Naive thymus-derived CD4-positive, alpha-beta T cell (primary cell): ENCODE measurements at regions of chr5 and their contacts with region 1.

Region 1: DNA sequence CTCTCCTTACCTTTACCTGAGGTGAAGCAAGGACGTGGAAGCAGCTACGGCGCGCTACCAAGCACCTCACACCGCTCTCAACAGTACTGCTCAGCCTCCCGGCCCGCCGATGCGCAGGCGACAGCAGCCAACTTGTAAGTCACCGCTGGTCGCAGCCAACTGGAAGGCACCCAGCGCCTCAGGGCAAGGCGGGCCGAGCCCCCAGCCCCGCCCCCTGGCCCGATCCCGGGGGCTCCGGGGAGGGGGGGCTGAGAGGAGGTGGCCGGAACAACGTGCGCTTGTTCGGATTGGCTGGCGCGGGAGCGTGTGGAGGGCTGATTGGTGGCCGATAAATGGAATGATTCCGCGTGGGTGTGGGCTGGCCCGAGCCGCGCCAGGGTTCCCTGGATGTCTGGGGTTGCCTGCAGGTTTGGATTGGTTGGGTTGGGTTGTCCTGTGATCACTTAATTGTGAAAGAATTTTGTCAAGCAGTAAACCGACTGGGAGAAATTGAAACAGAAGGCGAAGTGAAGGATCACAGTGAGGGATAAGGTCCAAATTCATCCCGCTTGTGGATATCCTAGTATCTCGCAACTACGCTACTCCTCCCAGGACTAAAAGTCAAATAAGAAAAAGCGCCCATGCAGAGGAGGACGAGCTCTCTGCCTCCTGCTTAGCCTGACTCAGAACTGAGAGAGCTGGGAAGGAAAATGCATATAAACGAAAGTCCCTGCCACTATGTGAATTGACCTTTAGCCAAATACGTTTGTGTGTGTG is at the start of gene STARD4:
- DNase-seq: peak; percentile 79 to 94 (median 92)
- ATAC-seq: peak; percentile 97
- H3K4me3 ChIP-seq: peak within 1 kb of the TSS; percentile 81
- H3K4me3 Mint-ChIP-seq: peak within 1 kb of the TSS; percentile 91 to 100 (median 98)
- H3K27ac ChIP-seq: peak within 1 kb of the TSS; percentile 73
- H3K27ac Mint-ChIP-seq: peak within 1 kb of the TSS; percentile 90 to 98 (median 94)
- H3K4me1 ChIP-seq: peaks cover 0 to 14% of the 10 kb centered on the region in 2 donors
- H3K4me1 Mint-ChIP-seq: peaks cover 17 to 53% (median 28%) of the 10 kb centered on the region in 7 donors
- H3K27me3 ChIP-seq: no peaks in the 10 kb centered on the region
- H3K27me3 Mint-ChIP-seq: no peaks in the 10 kb centered on the region
- total RNA-seq, gene STARD4: 11.1 to 70.8 (median 17.1) TPM

Region 2: DNA sequence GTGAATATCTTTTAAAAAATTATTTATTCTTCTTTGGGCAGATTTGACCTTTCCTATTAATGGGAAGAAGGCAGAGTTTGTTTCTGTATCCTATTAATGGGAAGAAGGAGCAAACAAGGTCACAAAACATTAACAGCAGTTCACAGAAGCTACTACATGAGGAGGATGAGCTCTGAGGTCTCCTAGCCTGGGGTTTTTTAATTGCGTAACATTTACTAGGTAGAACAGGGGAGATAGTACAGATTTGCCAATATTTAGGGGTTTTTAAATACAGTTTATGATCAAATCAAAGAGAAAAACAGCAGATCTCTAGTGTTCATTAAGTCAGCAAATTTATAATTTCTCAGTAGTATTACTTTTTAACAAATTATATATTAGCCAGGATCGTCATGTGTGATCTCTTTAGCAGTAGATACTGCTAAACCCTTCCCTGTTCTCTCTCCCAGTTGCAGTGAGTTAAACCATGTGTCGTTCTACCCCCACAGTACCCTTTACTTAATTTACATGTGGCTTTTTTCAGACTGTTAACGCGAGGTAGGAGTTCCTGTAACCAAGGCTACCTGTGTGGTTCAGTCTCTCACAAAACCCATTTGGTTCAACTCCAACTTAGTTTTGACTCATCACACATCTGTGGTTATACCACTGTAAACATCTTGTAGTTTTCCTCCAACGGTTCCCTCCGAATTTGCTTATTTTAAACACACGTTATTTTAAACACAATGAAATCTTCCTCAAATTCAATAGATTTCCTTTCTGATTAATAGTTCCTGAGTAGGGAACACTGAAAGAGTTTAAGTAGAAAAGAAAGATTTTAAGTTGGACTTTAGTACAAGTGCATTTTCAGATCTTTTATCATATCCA is 760.4 kb before region 1 on chr5:
- CTCF ChIA-PET with region 1: no interaction called
- POLR2A ChIA-PET with region 1: no interaction called
- intact Hi-C with region 1: loop called in 1 of 2 experiments (anchors 5 kb)
- DNase-seq: peak in 2 of 9 donors; percentile 8 to 30
- ATAC-seq: peak; percentile 82
- H3K4me3 ChIP-seq: no peak overlapping the region
- H3K4me3 Mint-ChIP-seq: peak overlapping the region in 1 of 10 donors; percentile 68
- H3K27ac ChIP-seq: no peak overlapping the region
- H3K27ac Mint-ChIP-seq: peak overlapping the region in 8 of 9 donors; percentile 5 to 84 (median 59)
- H3K4me1 ChIP-seq: peaks cover 0 to 12% of the 10 kb centered on the region in 2 donors
- H3K4me1 Mint-ChIP-seq: peaks cover 15 to 47% (median 34%) of the 10 kb centered on the region in 7 donors
- H3K27me3 ChIP-seq: no peaks in the 10 kb centered on the region
- H3K27me3 Mint-ChIP-seq: no peaks in the 10 kb centered on the region

Region 3: DNA sequence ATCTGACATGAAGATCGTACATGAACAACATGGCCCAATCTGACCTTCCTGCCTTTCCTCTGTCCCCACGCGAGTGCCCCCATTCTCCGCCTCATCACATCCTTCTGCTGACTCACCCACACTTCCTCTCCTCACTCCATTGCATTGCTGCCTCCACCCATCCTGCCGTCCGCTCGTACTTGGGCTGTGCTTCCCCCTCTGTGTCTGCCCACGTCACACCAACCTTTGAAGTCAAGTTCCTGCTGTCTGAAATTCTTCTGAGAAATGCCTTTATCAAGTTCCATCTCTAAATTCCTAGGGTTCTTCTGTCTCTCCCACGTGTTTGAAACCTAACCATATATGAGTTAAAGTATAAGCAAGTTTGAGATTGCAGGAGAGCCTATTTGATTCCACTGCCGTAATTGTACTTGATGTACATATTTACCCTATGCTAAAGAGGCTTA is 17.8 kb after region 1 on chr5:
- CTCF ChIA-PET with region 1: interaction called, 10 read pairs
- POLR2A ChIA-PET with region 1: interaction called, 6 read pairs
- intact Hi-C with region 1: loop called (anchors 1 kb)
- DNase-seq: peak; percentile 51 to 94 (median 78)
- ATAC-seq: peak; percentile 100
- H3K4me3 ChIP-seq: peak overlapping the region; percentile 6
- H3K4me3 Mint-ChIP-seq: peak overlapping the region; percentile 1 to 78 (median 66)
- H3K27ac ChIP-seq: peak overlapping the region; percentile 34
- H3K27ac Mint-ChIP-seq: peak overlapping the region; percentile 6 to 90 (median 76)
- H3K4me1 ChIP-seq: peaks cover 9 to 13% of the 10 kb centered on the region in 2 donors
- H3K4me1 Mint-ChIP-seq: peaks cover 10 to 28% (median 14%) of the 10 kb centered on the region in 7 donors
- H3K27me3 ChIP-seq: no peaks in the 10 kb centered on the region
- H3K27me3 Mint-ChIP-seq: peaks cover 0 to 3% (median 0%) of the 10 kb centered on the region in 5 donors

Region 4: DNA sequence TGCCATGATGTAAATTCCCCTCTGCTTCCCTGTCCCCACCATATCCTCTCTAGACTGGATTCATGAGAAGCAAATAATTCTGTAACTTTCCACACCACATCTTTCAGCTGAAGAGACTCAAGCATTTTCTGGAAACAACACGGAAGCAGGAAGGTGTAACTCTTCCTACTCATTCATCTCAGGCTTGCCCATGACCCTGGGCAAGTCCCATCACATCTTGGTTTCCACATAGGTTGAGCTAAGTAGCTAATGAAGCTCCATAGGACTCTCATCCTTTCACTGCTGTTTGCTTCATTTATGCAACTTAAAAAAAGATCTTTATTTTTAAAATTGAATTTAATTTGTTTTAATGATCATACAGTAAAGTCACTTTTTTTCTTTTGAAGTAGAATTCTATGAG is 32.5 kb after region 1 on chr5:
- CTCF ChIA-PET with region 1: no interaction called
- POLR2A ChIA-PET with region 1: no interaction called
- intact Hi-C with region 1: no loop called
- DNase-seq: no peak
- ATAC-seq: no peak
- H3K4me3 ChIP-seq: no peak overlapping the region
- H3K4me3 Mint-ChIP-seq: no peak overlapping the region
- H3K27ac ChIP-seq: no peak overlapping the region
- H3K27ac Mint-ChIP-seq: no peak overlapping the region
- H3K4me1 ChIP-seq: no peaks in the 10 kb centered on the region
- H3K4me1 Mint-ChIP-seq: peaks cover 0 to under 1% (median 0%) of the 10 kb centered on the region in 7 donors
- H3K27me3 ChIP-seq: no peaks in the 10 kb centered on the region
- H3K27me3 Mint-ChIP-seq: peaks cover 0 to 30% (median 3%) of the 10 kb centered on the region in 5 donors

Region 5: GRCh38 chr5:111792471-111793058 is 280.0 kb after region 1 on chr5:
- CTCF ChIA-PET with region 1: no interaction called
- POLR2A ChIA-PET with region 1: no interaction called
- intact Hi-C with region 1: no loop called
- DNase-seq: no peak
- ATAC-seq: no peak
- H3K4me3 ChIP-seq: no peak overlapping the region
- H3K4me3 Mint-ChIP-seq: no peak overlapping the region
- H3K27ac ChIP-seq: no peak overlapping the region
- H3K27ac Mint-ChIP-seq: no peak overlapping the region
- H3K4me1 ChIP-seq: no peaks in the 10 kb centered on the region
- H3K4me1 Mint-ChIP-seq: peaks cover 0 to 5% (median 0%) of the 10 kb centered on the region in 7 donors
- H3K27me3 ChIP-seq: no peaks in the 10 kb centered on the region
- H3K27me3 Mint-ChIP-seq: peaks cover 0 to 22% (median 4%) of the 10 kb centered on the region in 5 donors

Region 6: GRCh38 chr5:112014783-112015395 is 502.3 kb after region 1 on chr5:
- CTCF ChIA-PET with region 1: no interaction called
- POLR2A ChIA-PET with region 1: no interaction called
- intact Hi-C with region 1: no loop called
- DNase-seq: no peak
- ATAC-seq: no peak
- H3K4me3 ChIP-seq: no peak overlapping the region
- H3K4me3 Mint-ChIP-seq: no peak overlapping the region
- H3K27ac ChIP-seq: no peak overlapping the region
- H3K27ac Mint-ChIP-seq: no peak overlapping the region
- H3K4me1 ChIP-seq: no peaks in the 10 kb centered on the region
- H3K4me1 Mint-ChIP-seq: no peaks in the 10 kb centered on the region
- H3K27me3 ChIP-seq: peaks cover 0 to 3% of the 10 kb centered on the region in 2 donors
- H3K27me3 Mint-ChIP-seq: peaks cover 0 to 11% (median 9%) of the 10 kb centered on the region in 5 donors